K562 (cell line): ENCODE measurements at regions of chr2 and their contacts with region 1.

Region 1: DNA sequence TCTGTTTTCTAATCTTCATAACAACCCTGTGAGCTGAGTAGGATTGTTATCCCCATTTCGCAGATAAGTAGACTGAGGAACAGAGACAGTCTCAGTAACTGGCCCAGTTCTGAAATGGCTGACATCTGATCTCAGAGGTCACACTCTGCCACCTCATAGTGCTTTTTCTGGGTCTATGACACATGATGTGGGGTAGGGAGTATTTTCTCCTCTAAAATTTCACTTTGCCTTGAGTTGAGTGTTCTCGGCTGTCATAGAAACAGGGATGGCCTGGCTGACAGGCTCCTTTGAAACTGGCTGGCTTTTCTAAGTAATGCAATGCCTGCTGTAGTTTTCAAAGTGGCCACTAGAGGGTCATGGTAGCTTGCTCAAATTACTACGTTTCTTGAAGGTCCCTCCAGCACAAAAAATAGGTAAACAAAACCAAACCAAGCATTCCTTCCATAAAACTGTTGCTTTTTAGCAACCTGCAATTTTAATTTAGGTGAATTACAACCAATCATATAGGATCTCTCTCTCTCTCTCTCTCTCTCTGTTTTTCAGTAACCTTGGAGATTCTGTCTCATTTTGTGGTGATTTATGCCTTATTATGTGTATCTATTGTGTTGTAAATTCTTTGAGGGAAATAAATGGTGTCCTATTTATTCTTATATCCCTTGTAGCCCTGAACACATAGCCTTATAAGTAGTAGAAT is 84.2 kb upstream of the TTN start:
- DNase-seq: peak; percentile 43 to 73 (median 71)
- ATAC-seq: peak; percentile 95
- H3K4me3 ChIP-seq: no peak overlapping the region
- H3K27ac ChIP-seq: no peak overlapping the region
- H3K4me1 ChIP-seq: no peaks in the 10 kb centered on the region
- H3K27me3 ChIP-seq: no peaks in the 10 kb centered on the region
- CTCF ChIP-seq: peak; percentile 71 to 89 (median 84)
- EP300 ChIP-seq: no peak
- POLR2A ChIP-seq: no peak
- RAD21 ChIP-seq: peak; percentile 60 to 76

Region 2: DNA sequence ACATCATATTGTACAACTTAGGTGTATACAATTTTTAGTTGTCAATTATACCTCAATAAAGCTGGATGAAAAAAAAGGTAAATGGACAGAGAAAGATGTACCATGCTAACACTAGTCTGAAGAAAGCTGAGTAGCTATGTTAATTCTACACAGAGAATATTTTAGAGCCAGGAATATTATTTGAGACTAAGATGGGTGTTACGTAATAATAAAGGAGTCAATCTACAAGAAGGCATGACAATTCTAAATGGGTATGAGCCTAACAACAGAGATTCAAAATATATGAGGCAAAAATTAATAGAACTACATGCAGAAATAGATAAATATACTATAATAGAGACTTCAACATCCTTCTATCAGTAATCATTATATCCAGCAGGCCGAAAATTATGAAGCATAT is 89.4 kb after region 1 on chr2:
- CTCF ChIA-PET with region 1: no interaction called
- POLR2A ChIA-PET with region 1: no interaction called
- in situ Hi-C with region 1: no loop called
- intact Hi-C with region 1: no loop called
- DNase-seq: no peak
- ATAC-seq: no peak
- H3K4me3 ChIP-seq: no peak overlapping the region
- H3K27ac ChIP-seq: no peak overlapping the region
- H3K4me1 ChIP-seq: no peaks in the 10 kb centered on the region
- H3K27me3 ChIP-seq: no peaks in the 10 kb centered on the region
- CTCF ChIP-seq: no peak
- EP300 ChIP-seq: no peak
- POLR2A ChIP-seq: no peak
- RAD21 ChIP-seq: no peak

Region 3: DNA sequence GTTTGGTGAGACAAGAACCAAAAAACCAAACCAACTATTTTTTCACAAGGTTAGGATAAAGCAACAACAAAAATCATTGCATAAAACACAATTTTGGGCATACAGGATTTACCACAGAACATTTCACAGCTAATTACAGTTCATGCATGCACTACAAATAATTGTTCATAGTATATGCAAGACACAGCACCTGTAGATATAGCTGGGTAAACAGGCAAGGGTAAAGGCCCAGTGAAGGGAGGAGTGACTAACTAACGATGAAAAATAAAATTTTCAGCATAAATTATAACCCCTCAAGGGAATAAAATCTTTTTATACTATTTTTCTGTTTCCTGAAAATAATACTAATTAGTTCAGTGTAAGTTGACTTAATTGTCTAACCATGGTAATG is 231.9 kb after region 1 on chr2:
- CTCF ChIA-PET with region 1: no interaction called
- POLR2A ChIA-PET with region 1: no interaction called
- in situ Hi-C with region 1: no loop called
- intact Hi-C with region 1: loop called (anchors 5 kb)
- DNase-seq: no peak
- ATAC-seq: no peak
- H3K4me3 ChIP-seq: no peak overlapping the region
- H3K27ac ChIP-seq: no peak overlapping the region
- H3K4me1 ChIP-seq: no peaks in the 10 kb centered on the region
- H3K27me3 ChIP-seq: no peaks in the 10 kb centered on the region
- CTCF ChIP-seq: no peak
- EP300 ChIP-seq: no peak
- POLR2A ChIP-seq: no peak
- RAD21 ChIP-seq: no peak